AG04449 (cell line): ENCODE measurements at regions of chr12 and their contacts with region 1.

Region 1: GRCh38 chr12:75289753-75290152 is 40.4 kb downstream of the CAPS2 start:
- DNase-seq: no peak
- H3K4me3 ChIP-seq: no peak overlapping the region
- CTCF ChIP-seq: no peak

Region 2: GRCh38 chr12:74801625-74802024 is 488.1 kb before region 1 on chr12:
- CTCF ChIA-PET with region 1: interaction called, 10 read pairs
- POLR2A ChIA-PET with region 1: no interaction called
- DNase-seq: no peak
- H3K4me3 ChIP-seq: no peak overlapping the region
- CTCF ChIP-seq: no peak